ENCODE measurements at regions of chr13 and their contacts with region 1.

Region 1: GRCh38 chr13:23871616-23872220 is 17.5 kb downstream of the MIPEP start:
- DNase-seq: no peak
- H3K4me3 ChIP-seq: no peak overlapping the region
- H3K27ac ChIP-seq: no peak overlapping the region
- H3K4me1 ChIP-seq: no peaks in the 10 kb centered on the region
- H3K27me3 ChIP-seq: no peaks in the 10 kb centered on the region
- CTCF ChIP-seq: peak; percentile 45

Region 2: DNA sequence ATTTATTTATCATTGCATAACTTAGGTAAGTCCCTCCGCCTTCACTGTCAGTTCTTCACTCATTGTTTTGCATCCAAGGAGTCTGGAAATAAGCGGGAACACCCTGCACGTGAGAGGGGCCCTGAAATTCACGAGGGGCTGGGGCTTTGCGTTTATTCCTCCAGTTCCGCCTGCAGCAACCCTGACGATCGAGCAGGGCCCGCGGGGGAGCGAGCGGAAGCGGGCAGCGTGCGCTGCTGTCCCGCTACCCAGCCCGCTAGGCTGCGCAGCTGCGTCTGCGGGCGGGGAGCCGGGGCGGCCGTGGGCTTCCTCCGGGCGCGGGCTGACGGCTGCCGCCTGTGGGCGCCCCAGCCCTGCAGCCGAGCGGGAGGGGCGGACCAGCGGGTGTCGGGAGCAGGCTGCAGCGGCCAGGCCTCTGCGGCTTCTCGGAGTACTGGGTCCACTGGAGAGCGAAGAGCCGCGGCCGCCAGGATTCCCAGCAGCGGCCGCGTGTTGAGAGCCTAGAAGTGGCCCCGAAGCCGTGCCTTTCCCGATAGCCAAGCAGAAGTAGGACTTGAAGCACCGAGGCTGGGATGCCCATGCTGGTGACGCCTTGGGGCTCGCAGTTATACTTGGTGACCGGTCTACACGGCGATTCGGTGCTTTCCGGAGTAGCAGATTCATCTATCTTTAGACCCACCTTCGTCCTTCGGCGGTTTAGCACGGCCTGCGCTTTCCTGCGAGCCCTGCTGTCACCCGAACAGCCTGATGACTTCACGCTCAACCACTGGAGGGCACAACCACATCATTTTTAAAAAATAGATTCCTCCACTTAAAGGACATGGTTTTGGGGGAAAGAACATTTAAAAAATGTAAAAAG is 405.3 kb before region 1 on chr13:
- intact Hi-C with region 1: loop called (anchors 2 kb)
- DNase-seq: peak; percentile 46
- H3K4me3 ChIP-seq: peak overlapping the region; percentile 41
- H3K27ac ChIP-seq: peak overlapping the region; percentile 51
- H3K4me1 ChIP-seq: no peaks in the 10 kb centered on the region
- H3K27me3 ChIP-seq: no peaks in the 10 kb centered on the region
- CTCF ChIP-seq: no peak

Region 3: DNA sequence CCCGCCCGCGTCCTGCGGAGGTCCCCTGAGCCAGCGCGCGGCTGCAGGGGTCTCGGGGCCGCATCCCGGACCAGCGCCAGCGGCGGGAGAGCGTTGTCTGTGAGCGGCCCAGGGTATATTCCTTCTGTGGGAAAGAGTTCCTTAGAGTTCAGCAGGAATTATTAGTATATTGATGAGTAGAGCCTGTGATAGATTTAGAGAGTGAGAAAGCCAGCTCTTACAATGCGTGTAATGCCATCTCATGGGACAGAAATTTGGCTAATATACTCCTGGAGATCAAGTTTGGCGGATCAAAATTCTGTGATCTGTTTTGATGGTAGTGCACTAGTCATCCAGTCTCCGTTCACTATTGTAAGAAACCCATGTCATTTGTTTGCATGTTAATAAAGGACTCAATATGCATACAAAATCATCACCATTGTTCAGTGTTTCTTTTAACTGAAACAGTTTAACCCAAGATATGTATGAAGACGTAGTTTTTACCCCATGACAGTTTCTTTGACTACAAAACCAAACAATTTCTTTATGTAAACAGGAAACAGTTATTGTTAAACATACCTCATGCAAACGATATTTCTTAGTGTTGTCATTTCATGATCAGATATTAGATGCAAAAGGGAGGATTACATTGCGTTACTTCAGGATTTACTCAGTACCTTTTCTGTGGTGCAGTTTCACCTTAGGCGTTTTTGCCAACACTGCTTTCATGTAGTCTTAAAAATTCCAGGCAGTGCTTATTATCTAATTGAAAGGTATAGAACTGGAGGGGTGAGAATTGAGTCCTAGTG is 291.6 kb before region 1 on chr13:
- intact Hi-C with region 1: loop called (anchors 10 kb)
- DNase-seq: no peak
- H3K4me3 ChIP-seq: peak overlapping the region; percentile 79
- H3K27ac ChIP-seq: no peak overlapping the region
- H3K4me1 ChIP-seq: no peaks in the 10 kb centered on the region
- H3K27me3 ChIP-seq: peaks cover 16% of the 10 kb centered on the region
- CTCF ChIP-seq: no peak